ENCODE measurements at regions of chr1 and their contacts with region 1.

Region 1: GRCh38 chr1:53945433-53946251 is at the start of gene IFT25:
- DNase-seq: peak; percentile 98
- H3K4me3 Mint-ChIP-seq: peak within 1 kb of the TSS; percentile 96
- H3K27ac Mint-ChIP-seq: peak within 1 kb of the TSS; percentile 92
- H3K4me1 Mint-ChIP-seq: peaks cover 50% of the 10 kb centered on the region
- H3K27me3 Mint-ChIP-seq: no peaks in the 10 kb centered on the region
- total RNA-seq, gene IFT25: 60.2 to 63.2 TPM

Region 2: DNA sequence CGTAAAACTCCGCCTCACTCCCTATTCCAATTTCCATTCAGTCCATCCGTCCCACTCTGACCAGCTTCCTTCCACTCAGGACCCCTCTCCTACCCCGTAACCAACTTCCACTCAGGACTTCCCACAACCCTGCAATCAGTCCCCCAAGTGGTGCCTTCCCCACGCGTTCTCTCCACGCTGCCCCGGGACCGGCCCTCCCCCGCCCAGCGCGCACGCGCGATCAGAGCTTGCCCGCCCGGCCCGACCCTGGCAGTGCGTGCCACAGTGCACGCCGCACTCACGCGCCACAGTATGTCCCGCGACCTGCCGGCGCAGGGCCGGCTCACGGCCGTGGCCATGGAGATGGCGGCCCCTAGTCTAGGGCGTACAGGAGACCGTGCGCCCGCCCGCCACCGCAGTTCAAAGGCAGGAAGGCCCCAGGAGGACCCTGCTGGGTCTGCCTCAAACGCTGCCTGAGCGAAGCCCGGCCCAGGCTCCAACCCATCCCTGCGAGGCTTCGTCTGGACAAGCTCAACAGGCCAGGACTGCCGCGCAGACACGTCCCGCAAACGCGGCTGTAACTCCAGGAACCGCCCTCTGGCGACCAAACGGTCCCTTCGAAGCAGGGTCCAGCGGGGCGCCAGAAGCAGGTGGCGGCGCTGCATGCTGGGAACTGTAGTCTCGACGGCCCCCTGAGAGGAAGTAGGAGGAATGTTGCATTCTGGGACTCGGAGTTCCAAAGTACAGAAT is 107.6 kb before region 1 on chr1 and contains the start of gene NDC1:
- CTCF ChIA-PET with region 1: interaction called, 4 read pairs
- POLR2A ChIA-PET with region 1: interaction called, 17 read pairs
- DNase-seq: peak; percentile 89
- H3K4me3 Mint-ChIP-seq: peak within 1 kb of the TSS; percentile 99
- H3K27ac Mint-ChIP-seq: peak within 1 kb of the TSS; percentile 94
- H3K4me1 Mint-ChIP-seq: peaks cover 29% of the 10 kb centered on the region
- H3K27me3 Mint-ChIP-seq: no peaks in the 10 kb centered on the region
- total RNA-seq, gene NDC1: 23.2 to 24.7 TPM

Region 3: DNA sequence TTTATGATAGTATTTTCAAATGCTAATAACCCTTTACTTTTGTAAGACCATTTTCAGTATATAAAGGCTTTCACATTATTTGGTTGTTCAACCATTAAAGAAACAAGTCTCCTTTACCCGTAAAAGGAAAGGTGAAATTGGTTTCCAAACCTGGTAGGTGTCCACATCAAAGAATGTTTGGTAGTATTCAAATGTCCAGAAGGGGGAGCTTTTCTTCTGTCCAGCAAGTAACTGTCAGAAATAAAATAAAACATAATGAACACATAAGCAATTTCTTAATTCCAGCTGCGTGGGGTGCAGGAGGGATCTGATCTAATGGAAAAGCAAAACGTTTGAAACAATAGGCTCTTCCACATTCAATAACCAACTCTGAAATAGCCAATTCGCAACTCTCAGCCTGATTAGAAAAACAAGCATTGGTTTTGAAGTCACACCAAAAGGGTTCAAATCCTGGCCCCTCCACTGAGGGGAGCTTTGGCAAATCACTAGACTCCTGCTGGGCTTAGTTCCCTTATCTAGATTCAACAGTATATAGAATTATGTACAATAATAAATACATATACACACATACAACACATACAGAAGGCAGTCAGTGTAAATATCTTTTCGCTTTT is 67.0 kb before region 1 on chr1:
- CTCF ChIA-PET with region 1: interaction called, 35 read pairs
- POLR2A ChIA-PET with region 1: interaction called, 3 read pairs
- DNase-seq: no peak
- H3K4me3 Mint-ChIP-seq: no peak overlapping the region
- H3K27ac Mint-ChIP-seq: no peak overlapping the region
- H3K4me1 Mint-ChIP-seq: no peaks in the 10 kb centered on the region
- H3K27me3 Mint-ChIP-seq: no peaks in the 10 kb centered on the region

Region 4: GRCh38 chr1:53899206-53899628 is 46.4 kb before region 1 on chr1:
- CTCF ChIA-PET with region 1: interaction called, 4 read pairs
- POLR2A ChIA-PET with region 1: interaction called, 13 read pairs
- DNase-seq: no peak
- H3K4me3 Mint-ChIP-seq: no peak overlapping the region
- H3K27ac Mint-ChIP-seq: no peak overlapping the region
- H3K4me1 Mint-ChIP-seq: peaks cover 9% of the 10 kb centered on the region
- H3K27me3 Mint-ChIP-seq: peaks cover 10% of the 10 kb centered on the region

Region 5: DNA sequence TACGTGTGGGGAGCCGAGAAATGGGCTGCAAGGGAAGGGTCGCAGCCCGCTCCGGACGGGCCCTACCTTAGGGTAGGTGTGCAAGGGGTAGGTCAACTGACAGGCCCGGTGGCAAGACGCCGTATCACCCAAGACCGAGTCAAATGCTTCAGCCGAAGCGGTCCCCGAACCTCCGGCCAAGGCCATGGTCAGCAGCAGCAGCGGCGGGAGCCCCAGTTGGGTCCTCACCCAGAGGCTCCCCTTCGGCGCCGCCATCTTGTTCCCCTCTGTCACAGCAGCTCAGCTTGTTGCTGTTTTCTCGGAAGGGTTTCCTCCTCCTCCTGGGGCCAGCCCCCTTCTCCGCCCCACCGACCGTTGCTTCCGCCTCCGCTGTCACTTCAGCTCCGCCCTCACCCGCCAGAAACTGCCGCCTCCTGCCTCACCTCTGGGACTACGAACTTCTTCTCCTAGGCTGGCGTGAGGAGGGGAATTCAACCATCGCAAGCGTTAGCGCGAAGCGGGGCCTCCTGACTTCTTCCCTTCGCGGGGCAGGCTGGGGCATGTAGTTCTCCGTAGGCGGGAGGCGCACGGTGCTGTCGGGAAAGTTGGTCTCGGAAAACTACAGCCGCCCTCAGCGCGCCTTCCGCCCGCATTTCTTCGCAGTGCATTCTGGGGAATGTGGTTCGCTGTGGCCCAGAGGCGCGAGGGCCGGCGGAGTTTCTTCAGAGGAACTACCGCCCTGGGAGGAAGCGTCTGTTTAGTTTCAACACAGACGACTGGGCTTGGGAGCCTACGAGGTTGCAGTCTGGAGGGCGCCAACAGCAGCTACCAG is 107.5 kb after region 1 on chr1 and contains the starts of genes TCEANC2 and TMEM59:
- CTCF ChIA-PET with region 1: interaction called, 3 read pairs
- POLR2A ChIA-PET with region 1: interaction called, 51 read pairs
- DNase-seq: peak; percentile 99
- H3K4me3 Mint-ChIP-seq: no peak within 1 kb of the TSS
- H3K27ac Mint-ChIP-seq: no peak within 1 kb of the TSS
- H3K4me1 Mint-ChIP-seq: peaks cover 37% of the 10 kb centered on the region
- H3K27me3 Mint-ChIP-seq: no peaks in the 10 kb centered on the region
- total RNA-seq, gene TCEANC2: 11.5 to 13.5 TPM
- total RNA-seq, gene TMEM59: 278 to 280 TPM

Measured in activated CD4-positive, alpha-beta memory T cell treated with anti-CD3 and anti-CD28 coated beads, Interleukin-2, amount 10 ng/mL, durations not matched to agents 7 days and 5 days (primary cell).